CD4-positive, alpha-beta T cell (primary cell): ENCODE measurements at regions of chr3 and their contacts with region 1.

Region 1: DNA sequence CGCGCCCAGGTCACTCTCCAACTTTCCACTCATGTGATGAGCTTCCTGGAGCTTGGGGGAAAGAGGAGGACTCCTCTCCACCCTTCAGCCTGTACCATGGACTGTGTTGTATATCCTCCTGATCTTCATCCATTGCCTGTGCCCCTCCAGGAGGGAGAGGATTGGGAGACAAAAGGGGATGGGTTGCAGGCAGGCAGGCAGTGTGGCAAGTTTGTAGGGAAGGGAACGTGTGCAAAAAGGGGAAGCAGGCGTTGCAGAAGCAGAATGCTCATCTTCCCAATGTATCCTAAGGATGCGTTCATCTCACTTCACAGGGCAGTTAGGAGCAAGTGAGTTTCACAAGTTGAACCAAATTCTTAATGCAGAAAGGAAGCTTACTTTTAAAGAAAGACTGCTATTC is 28.1 kb upstream of the GHSR start:
- DNase-seq: peak in 2 of 14 experiments; percentile 9 to 12
- ATAC-seq: no peak
- H3K4me3 ChIP-seq: peak overlapping the region; percentile 50
- H3K4me3 Mint-ChIP-seq: peak overlapping the region; percentile 91
- H3K27ac ChIP-seq: no peak overlapping the region
- H3K27ac Mint-ChIP-seq: peak overlapping the region; percentile 80
- H3K4me1 ChIP-seq: no peaks in the 10 kb centered on the region
- H3K4me1 Mint-ChIP-seq: peaks cover 16% of the 10 kb centered on the region
- H3K27me3 ChIP-seq: peaks cover 0 to 4% of the 10 kb centered on the region in 2 experiments
- H3K27me3 Mint-ChIP-seq: no peaks in the 10 kb centered on the region
- CTCF ChIP-seq: no peak

Region 2: GRCh38 chr3:170961616-170962400 is 1514.5 kb before region 1 on chr3:
- CTCF ChIA-PET with region 1: no interaction called
- POLR2A ChIA-PET with region 1: no interaction called
- intact Hi-C with region 1: loop called (anchors 10 kb)
- DNase-seq: peak in 4 of 14 experiments; percentile 4 to 45 (median 36)
- ATAC-seq: no peak
- H3K4me3 ChIP-seq: no peak overlapping the region
- H3K4me3 Mint-ChIP-seq: no peak overlapping the region
- H3K27ac ChIP-seq: no peak overlapping the region
- H3K27ac Mint-ChIP-seq: no peak overlapping the region
- H3K4me1 ChIP-seq: no peaks in the 10 kb centered on the region
- H3K4me1 Mint-ChIP-seq: no peaks in the 10 kb centered on the region
- H3K27me3 ChIP-seq: no peaks in the 10 kb centered on the region
- H3K27me3 Mint-ChIP-seq: peaks cover 7% of the 10 kb centered on the region
- CTCF ChIP-seq: peak; percentile 64

Region 3: GRCh38 chr3:172332256-172333041 is 143.9 kb before region 1 on chr3:
- CTCF ChIA-PET with region 1: interaction called, 3 read pairs
- POLR2A ChIA-PET with region 1: no interaction called
- intact Hi-C with region 1: loop called (anchors 1 to 5 kb)
- DNase-seq: peak; percentile 21 to 74 (median 40)
- ATAC-seq: peak; percentile 77
- H3K4me3 ChIP-seq: no peak overlapping the region
- H3K4me3 Mint-ChIP-seq: no peak overlapping the region
- H3K27ac ChIP-seq: no peak overlapping the region
- H3K27ac Mint-ChIP-seq: no peak overlapping the region
- H3K4me1 ChIP-seq: no peaks in the 10 kb centered on the region
- H3K4me1 Mint-ChIP-seq: peaks cover 6% of the 10 kb centered on the region
- H3K27me3 ChIP-seq: no peaks in the 10 kb centered on the region
- H3K27me3 Mint-ChIP-seq: no peaks in the 10 kb centered on the region
- CTCF ChIP-seq: peak; percentile 94

Region 4: GRCh38 chr3:172461530-172462138 is 14.7 kb before region 1 on chr3:
- CTCF ChIA-PET with region 1: interaction called, 12 read pairs
- POLR2A ChIA-PET with region 1: interaction called, 3 read pairs
- intact Hi-C with region 1: no loop called
- DNase-seq: peak in 3 of 14 experiments; percentile 44 to 60 (median 56)
- ATAC-seq: peak; percentile 60
- H3K4me3 ChIP-seq: no peak overlapping the region
- H3K4me3 Mint-ChIP-seq: no peak overlapping the region
- H3K27ac ChIP-seq: no peak overlapping the region
- H3K27ac Mint-ChIP-seq: no peak overlapping the region
- H3K4me1 ChIP-seq: no peaks in the 10 kb centered on the region
- H3K4me1 Mint-ChIP-seq: no peaks in the 10 kb centered on the region
- H3K27me3 ChIP-seq: no peaks in the 10 kb centered on the region
- H3K27me3 Mint-ChIP-seq: peaks cover 3% of the 10 kb centered on the region
- CTCF ChIP-seq: peak; percentile 97